A549 (cell line): ENCODE measurements at regions of chr5 and their contacts with region 1.

Region 1: GRCh38 chr5:73498057-73499008 is at the start of gene BTF3:
- DNase-seq: peak; percentile 96 to 99
- ATAC-seq: peak; percentile 97
- H3K4me3 ChIP-seq: peak within 1 kb of the TSS; percentile 64
- H3K27ac ChIP-seq: peak within 1 kb of the TSS; percentile 90 to 98
- H3K4me1 ChIP-seq: peaks cover 34% of the 10 kb centered on the region
- CTCF ChIP-seq: no peak
- EP300 ChIP-seq: no peak
- POLR2A ChIP-seq: peak; percentile 89
- RAD21 ChIP-seq: no peak
- polyA plus RNA-seq, gene BTF3: 905 and 1,048 TPM in 2 replicates

Region 2: GRCh38 chr5:73387601-73388305 is 110.6 kb before region 1 on chr5:
- CTCF ChIA-PET with region 1: no interaction called
- POLR2A ChIA-PET with region 1: no interaction called
- DNase-seq: no peak
- ATAC-seq: no peak
- H3K4me3 ChIP-seq: no peak overlapping the region
- H3K27ac ChIP-seq: no peak overlapping the region
- H3K4me1 ChIP-seq: no peaks in the 10 kb centered on the region
- CTCF ChIP-seq: no peak
- EP300 ChIP-seq: no peak
- POLR2A ChIP-seq: no peak
- RAD21 ChIP-seq: no peak

Region 3: GRCh38 chr5:73486119-73486899 is 12.0 kb before region 1 on chr5:
- CTCF ChIA-PET with region 1: interaction called, 14 read pairs
- POLR2A ChIA-PET with region 1: no interaction called
- DNase-seq: no peak
- ATAC-seq: no peak
- H3K4me3 ChIP-seq: no peak overlapping the region
- H3K27ac ChIP-seq: no peak overlapping the region
- H3K4me1 ChIP-seq: no peaks in the 10 kb centered on the region
- CTCF ChIP-seq: no peak
- EP300 ChIP-seq: no peak
- POLR2A ChIP-seq: no peak
- RAD21 ChIP-seq: no peak

Region 4: GRCh38 chr5:73534971-73535370 is 36.6 kb after region 1 on chr5:
- CTCF ChIA-PET with region 1: interaction called, 15 read pairs
- POLR2A ChIA-PET with region 1: no interaction called
- DNase-seq: no peak
- ATAC-seq: no peak
- H3K4me3 ChIP-seq: no peak overlapping the region
- H3K27ac ChIP-seq: no peak overlapping the region
- H3K4me1 ChIP-seq: no peaks in the 10 kb centered on the region; the same call in 2 of the 3 replicates
- CTCF ChIP-seq: no peak
- EP300 ChIP-seq: no peak
- POLR2A ChIP-seq: no peak
- RAD21 ChIP-seq: no peak